GM10248 (cell line): ENCODE measurements at regions of chr1 and their contacts with region 1.

Region 1: GRCh38 chr1:167687919-167688519 is 33.8 kb upstream of the MPZL1 start:
- DNase-seq: peak; percentile 78
- CTCF ChIP-seq: peak; percentile 87

Region 2: GRCh38 chr1:167542109-167543032 is 145.6 kb before region 1 on chr1:
- CTCF ChIA-PET with region 1: interaction called, 22 read pairs
- POLR2A ChIA-PET with region 1: no interaction called
- DNase-seq: no peak
- CTCF ChIP-seq: no peak

Region 3: GRCh38 chr1:167573026-167573425 is 115.0 kb before region 1 on chr1:
- CTCF ChIA-PET with region 1: interaction called, 10 read pairs
- POLR2A ChIA-PET with region 1: no interaction called
- DNase-seq: no peak
- CTCF ChIP-seq: no peak

Region 4: DNA sequence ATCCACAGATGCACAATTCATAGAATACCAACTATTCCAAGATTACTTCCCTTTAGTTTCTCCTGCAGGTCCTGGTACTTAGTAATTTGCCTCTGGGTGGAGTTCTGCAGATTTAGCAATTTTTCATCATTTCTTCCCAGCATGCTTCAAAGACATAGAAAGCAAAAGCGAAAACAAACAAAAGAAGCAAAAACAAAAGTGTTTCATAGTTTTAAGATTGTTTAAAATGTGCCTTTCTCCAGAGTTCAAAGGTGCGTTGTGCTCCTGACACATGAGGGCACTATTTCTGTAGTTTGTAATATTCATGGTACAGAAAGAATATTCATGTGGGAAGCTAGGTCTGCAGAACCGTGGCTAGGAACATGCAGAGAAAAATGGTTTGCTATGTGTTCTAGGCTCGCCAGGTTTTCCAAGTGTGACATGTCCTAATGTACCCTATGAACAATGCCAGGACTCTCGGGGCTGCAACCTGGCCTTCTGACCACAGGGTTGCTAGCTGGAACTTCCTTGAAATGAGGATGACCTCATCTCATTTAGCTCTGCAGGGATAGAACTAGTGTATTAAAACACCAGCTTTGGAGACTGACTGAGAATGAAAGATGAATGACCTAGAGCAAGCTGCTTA is 88.0 kb before region 1 on chr1:
- CTCF ChIA-PET with region 1: interaction called, 102 read pairs
- POLR2A ChIA-PET with region 1: no interaction called
- DNase-seq: peak; percentile 65
- CTCF ChIP-seq: peak; percentile 74

Region 5: DNA sequence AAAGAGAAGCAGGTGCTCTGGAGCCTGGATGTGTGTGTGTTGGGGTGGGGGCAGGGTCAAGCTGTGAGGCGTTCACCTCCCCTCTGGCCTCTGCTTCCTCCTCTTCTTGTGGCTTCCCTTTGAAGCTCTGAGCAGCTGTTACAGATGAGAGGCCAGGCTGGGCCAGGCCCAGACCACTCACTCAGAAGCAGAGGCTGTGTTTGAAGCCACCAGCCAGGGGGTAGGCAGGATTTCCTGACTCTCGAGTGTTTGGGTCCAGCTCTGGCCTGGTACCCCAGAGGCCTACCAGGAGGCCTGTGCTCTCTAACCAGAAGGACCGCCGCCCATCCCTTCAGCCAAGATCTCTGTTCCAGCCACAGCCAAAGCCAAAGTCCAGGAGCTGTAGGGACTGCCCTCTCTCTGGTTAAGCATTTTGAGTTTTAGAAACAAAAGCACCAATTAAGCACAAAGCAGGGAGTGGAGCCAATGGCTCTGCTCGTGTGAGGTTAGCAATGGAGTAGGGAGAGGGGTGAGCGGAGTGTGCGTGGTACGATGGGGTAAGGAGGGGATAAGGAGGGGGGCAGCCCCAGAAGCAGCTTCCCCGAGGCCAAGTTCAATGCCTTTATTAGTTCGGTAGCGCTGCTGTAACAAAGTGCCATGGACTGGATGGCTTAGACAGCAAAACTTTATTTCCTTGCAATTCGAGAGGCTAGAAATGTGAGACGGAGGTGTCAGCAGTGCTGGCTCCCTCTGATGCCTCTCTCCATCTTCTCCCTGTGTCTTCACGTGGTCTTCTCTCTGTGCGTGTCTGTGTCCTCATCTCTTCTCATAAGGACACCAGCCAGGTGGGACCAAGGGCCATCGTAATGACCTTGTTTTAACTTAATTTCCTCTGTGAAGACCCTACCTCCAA is 37.5 kb before region 1 on chr1:
- CTCF ChIA-PET with region 1: interaction called, 10 read pairs
- POLR2A ChIA-PET with region 1: interaction called, 3 read pairs
- DNase-seq: peak; percentile 44
- CTCF ChIP-seq: no peak

Region 6: GRCh38 chr1:167676205-167676915 is 11.7 kb before region 1 on chr1:
- CTCF ChIA-PET with region 1: interaction called, 21 read pairs
- POLR2A ChIA-PET with region 1: no interaction called
- DNase-seq: peak; percentile 31
- CTCF ChIP-seq: peak; percentile 5

Region 7: GRCh38 chr1:167746988-167747655 is 59.1 kb after region 1 on chr1:
- CTCF ChIA-PET with region 1: no interaction called
- POLR2A ChIA-PET with region 1: no interaction called
- DNase-seq: no peak
- CTCF ChIP-seq: no peak

Region 8: GRCh38 chr1:168246506-168246905 is 558.5 kb after region 1 on chr1:
- CTCF ChIA-PET with region 1: no interaction called
- POLR2A ChIA-PET with region 1: no interaction called
- DNase-seq: no peak
- CTCF ChIP-seq: no peak